ENCODE measurements at regions of chr19 and their contacts with region 1.

Region 1: GRCh38 chr19:8580710-8581281 is 3.6 kb upstream of the MYO1F start:
- DNase-seq: peak; percentile 89
- H3K4me3 Mint-ChIP-seq: no peak overlapping the region
- H3K27ac Mint-ChIP-seq: no peak overlapping the region
- H3K4me1 Mint-ChIP-seq: peaks cover 30% of the 10 kb centered on the region
- H3K27me3 Mint-ChIP-seq: peaks cover 3% of the 10 kb centered on the region

Region 2: GRCh38 chr19:8412783-8413628 is 167.8 kb before region 1 on chr19 and contains the start of gene MARCHF2:
- CTCF ChIA-PET with region 1: interaction called, 23 read pairs
- POLR2A ChIA-PET with region 1: interaction called, 5 read pairs
- DNase-seq: peak; percentile 98
- H3K4me3 Mint-ChIP-seq: peak within 1 kb of the TSS; percentile 58
- H3K27ac Mint-ChIP-seq: no peak within 1 kb of the TSS
- H3K4me1 Mint-ChIP-seq: peaks cover 10% of the 10 kb centered on the region
- H3K27me3 Mint-ChIP-seq: no peaks in the 10 kb centered on the region
- total RNA-seq, gene MARCHF2: 20.6 to 20.8 TPM

Region 3: GRCh38 chr19:8487137-8487851 is 93.5 kb before region 1 on chr19:
- CTCF ChIA-PET with region 1: interaction called, 31 read pairs
- POLR2A ChIA-PET with region 1: interaction called, 5 read pairs
- DNase-seq: peak; percentile 69
- H3K4me3 Mint-ChIP-seq: no peak overlapping the region
- H3K27ac Mint-ChIP-seq: peak overlapping the region; percentile 86
- H3K4me1 Mint-ChIP-seq: peaks cover 31% of the 10 kb centered on the region
- H3K27me3 Mint-ChIP-seq: no peaks in the 10 kb centered on the region

Region 4: DNA sequence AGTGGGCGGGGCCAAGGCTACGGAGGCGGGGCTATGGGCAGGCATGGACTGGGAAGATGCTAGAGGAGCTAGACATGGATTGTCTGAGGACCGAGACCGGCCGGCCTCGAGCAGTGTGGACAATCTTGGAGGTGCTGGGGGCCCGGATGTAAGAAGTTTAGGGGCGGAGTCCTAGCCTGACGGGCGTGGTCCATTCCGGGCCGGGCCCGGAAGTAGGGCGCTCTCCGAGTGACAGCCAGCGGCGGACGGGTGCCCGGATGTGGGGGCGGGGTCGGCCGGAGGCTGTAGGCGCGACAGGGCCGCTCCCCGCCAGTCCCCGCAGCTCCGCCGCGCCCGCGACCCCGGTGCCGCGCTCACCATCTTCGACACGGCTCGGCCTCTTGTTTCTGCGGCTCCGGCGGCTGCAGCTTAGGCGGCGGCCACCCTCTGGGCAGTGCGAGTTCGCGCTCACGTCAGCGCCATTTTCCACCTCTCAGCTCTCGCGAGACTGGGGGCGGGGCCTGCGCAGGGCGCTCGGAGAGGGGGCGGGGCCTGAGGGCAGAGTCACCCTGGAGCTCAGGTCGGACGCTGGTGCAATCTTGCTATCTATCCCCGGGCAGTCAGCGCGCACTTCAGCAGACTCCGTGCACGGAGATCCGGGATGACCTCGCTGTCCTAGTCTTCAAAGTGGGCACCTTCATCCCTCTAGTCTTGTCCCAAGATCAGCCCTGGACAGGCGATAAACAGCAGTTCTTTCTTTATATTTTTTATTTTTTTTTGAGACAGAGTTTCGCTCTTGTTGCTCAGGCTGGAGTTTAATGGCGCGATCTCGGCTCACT is 66.9 kb before region 1 on chr19 and contains the start of gene ZNF414:
- CTCF ChIA-PET with region 1: interaction called, 58 read pairs
- POLR2A ChIA-PET with region 1: interaction called, 50 read pairs
- DNase-seq: peak; percentile 97
- H3K4me3 Mint-ChIP-seq: peak within 1 kb of the TSS; percentile 86
- H3K27ac Mint-ChIP-seq: peak within 1 kb of the TSS; percentile 98
- H3K4me1 Mint-ChIP-seq: peaks cover 59% of the 10 kb centered on the region
- H3K27me3 Mint-ChIP-seq: no peaks in the 10 kb centered on the region
- total RNA-seq, gene ZNF414: 29.7 to 33.3 TPM

Region 5: GRCh38 chr19:8569066-8569771 is 11.6 kb before region 1 on chr19:
- CTCF ChIA-PET with region 1: interaction called, 69 read pairs
- POLR2A ChIA-PET with region 1: interaction called, 31 read pairs
- DNase-seq: peak; percentile 88
- H3K4me3 Mint-ChIP-seq: peak overlapping the region; percentile 69
- H3K27ac Mint-ChIP-seq: peak overlapping the region; percentile 96
- H3K4me1 Mint-ChIP-seq: peaks cover 85% of the 10 kb centered on the region
- H3K27me3 Mint-ChIP-seq: no peaks in the 10 kb centered on the region

Region 6: DNA sequence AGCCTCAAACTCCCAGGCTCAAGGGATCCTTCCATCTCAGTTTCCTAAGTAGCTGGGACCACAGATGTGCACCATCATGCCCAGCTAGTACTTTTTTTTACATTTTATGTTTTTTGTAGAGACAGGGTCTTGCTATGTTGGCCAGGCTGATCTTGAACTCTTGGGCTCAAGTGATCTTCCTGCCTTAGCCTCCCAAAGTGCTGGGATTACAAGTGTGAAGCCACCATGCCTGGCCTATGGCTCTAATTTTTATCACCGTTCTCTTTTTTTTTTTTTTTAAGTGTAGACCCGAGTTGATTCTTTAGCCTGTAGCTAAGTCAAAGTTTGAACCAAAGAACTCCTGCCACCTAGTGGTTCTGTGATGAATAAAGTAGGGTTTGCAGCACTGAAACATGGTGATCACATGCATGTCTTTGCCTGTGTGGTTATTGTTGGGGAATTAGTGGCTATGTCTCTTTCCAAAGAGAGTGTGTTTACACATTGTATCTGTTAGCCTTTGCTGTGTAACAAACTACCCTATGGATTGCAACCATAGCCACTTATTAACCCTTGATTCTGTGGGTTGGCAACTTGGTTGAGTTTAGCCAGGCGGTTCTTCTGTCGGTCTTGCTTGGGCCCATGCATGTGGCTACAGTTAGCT is 61.2 kb after region 1 on chr19:
- CTCF ChIA-PET with region 1: interaction called, 16 read pairs
- POLR2A ChIA-PET with region 1: no interaction called
- DNase-seq: no peak
- H3K4me3 Mint-ChIP-seq: no peak overlapping the region
- H3K27ac Mint-ChIP-seq: no peak overlapping the region
- H3K4me1 Mint-ChIP-seq: no peaks in the 10 kb centered on the region
- H3K27me3 Mint-ChIP-seq: peaks cover 11% of the 10 kb centered on the region

Region 7: DNA sequence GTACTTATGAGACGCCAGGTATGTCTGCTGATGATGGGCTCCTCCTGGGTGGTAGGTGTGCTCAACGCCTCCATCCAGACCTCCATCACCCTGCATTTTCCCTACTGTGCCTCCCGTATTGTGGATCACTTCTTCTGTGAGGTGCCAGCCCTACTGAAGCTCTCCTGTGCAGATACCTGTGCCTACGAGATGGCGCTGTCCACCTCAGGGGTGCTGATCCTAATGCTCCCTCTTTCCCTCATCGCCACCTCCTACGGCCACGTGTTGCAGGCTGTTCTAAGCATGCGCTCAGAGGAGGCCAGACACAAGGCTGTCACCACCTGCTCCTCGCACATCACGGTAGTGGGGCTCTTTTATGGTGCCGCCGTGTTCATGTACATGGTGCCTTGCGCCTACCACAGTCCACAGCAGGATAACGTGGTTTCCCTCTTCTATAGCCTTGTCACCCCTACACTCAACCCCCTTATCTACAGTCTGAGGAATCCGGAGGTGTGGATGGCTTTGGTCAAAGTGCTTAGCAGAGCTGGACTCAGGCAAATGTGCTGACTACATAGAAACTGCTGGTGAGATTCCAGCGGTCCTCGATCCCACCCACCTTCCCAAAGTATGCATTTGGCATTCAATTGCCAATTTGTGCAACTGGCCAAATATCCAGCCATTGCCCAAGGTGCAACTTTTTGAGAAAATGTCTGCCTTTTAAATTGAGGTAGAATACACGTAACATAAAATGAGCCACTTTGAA is 150.8 kb after region 1 on chr19:
- CTCF ChIA-PET with region 1: no interaction called
- POLR2A ChIA-PET with region 1: no interaction called
- DNase-seq: peak; percentile 18
- H3K4me3 Mint-ChIP-seq: no peak overlapping the region
- H3K27ac Mint-ChIP-seq: no peak overlapping the region
- H3K4me1 Mint-ChIP-seq: no peaks in the 10 kb centered on the region
- H3K27me3 Mint-ChIP-seq: no peaks in the 10 kb centered on the region

Measured in activated CD4-positive, alpha-beta memory T cell treated with anti-CD3 and anti-CD28 coated beads, Interleukin-2, amount 10 ng/mL, durations not matched to agents 7 days and 5 days (primary cell).